B cell (primary cell): ENCODE measurements at regions of chr2 and their contacts with region 1.

Region 1: DNA sequence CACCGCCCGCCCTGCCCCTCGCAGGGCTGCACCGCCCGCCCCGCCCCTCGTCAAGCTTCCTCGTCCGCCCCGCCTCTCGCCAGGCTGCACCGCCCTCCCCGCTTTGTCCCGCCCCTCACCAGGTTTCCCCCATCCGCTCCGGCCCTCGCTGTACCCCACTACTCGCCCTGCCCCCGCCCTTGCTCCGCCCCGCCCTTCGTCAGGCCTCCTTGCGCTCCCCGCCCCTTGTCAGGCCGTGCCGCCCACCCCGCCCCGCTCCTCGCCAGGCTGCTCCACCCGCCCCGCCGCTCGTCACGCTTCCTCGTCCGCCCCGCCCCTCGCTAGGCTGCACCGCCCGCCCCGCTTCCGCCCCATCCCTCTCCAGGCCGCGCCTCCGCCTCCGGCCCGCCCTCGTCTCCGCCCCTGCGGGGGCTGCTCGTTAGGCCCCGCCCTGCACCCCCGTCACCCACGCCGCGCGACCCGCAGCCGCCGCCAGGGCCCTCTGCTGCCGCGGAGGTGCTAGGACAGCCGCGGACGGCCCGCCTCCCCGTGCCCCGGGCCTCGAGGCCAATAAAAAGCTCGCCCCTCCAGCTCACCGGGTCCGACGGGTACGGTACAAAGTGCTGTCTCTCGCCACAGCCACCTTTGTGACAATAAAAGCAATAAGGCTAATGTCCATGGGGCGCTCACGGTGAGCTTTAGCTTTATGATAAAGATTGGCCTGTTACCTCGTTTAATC is 574 bp upstream of the DNPEP start:
- DNase-seq: peak; percentile 99
- ATAC-seq: peak; percentile 77
- H3K4me3 ChIP-seq: peak overlapping the region in 4 of 5 experiments; percentile 23 to 50 (median 45)
- H3K4me3 Mint-ChIP-seq: peak overlapping the region; percentile 95
- H3K27ac ChIP-seq: peak overlapping the region; percentile 62 to 85
- H3K27ac Mint-ChIP-seq: peak overlapping the region; percentile 93
- H3K4me1 ChIP-seq: peaks cover 15 to 18% of the 10 kb centered on the region in 2 donors
- H3K4me1 Mint-ChIP-seq: peaks cover 13% of the 10 kb centered on the region
- H3K27me3 ChIP-seq: peaks cover 0 to 3% (median 0%) of the 10 kb centered on the region in 4 experiments
- H3K27me3 Mint-ChIP-seq: peaks cover 5% of the 10 kb centered on the region
- CTCF ChIP-seq: peak; percentile 70

Region 2: DNA sequence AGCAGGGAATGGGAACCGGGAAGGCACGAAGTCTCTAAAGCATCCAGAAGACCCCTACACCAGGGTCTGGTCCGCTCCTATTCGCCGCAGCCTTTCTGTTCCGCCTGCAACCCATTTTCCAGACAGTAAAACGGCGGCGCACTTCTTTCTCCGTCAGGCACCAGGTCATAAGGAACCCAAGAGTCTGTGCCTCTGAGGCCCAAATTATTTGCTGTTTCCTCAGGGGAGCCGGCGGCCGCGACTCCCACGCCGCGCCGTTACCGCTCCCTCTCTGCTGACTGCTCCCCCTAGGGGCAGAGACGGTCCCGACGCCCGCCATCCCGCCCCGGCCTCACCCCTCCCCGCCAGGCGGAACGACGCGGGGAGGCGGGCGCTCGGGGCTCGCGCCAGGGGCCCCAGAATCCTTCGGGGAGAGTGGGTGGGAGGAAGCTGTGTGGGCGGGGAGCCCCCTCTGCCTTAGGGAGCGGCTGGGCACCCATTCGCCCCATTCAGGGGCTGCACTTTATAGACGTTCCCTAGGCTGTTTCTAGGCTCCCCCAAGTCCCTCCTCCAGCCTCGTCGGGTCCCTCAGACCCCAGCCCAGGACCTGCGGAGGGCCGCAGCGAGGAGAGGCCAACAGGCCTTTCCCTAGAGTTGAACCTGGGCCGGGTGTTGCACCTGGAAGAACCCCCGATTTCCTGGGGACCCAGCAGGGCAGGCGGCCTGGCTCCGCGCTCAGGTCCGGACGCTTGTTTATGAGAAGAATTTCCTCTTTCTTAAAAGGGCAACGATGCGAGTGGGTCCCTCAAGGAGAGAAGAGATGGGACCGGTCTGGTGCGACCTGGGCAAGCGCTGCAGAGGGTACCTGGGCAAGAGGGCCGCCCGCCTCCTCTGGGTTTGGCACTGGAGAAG is 992.2 kb before region 1 on chr2:
- CTCF ChIA-PET with region 1: no interaction called
- POLR2A ChIA-PET with region 1: no interaction called
- intact Hi-C with region 1: loop called (anchors 5 kb)
- DNase-seq: peak; percentile 98
- ATAC-seq: peak; percentile 69
- H3K4me3 ChIP-seq: peak overlapping the region; percentile 75 to 94 (median 89)
- H3K4me3 Mint-ChIP-seq: peak overlapping the region; percentile 96
- H3K27ac ChIP-seq: peak overlapping the region; percentile 88 to 89
- H3K27ac Mint-ChIP-seq: peak overlapping the region; percentile 99
- H3K4me1 ChIP-seq: peaks cover 35 to 61% of the 10 kb centered on the region in 2 donors
- H3K4me1 Mint-ChIP-seq: peaks cover 53% of the 10 kb centered on the region
- H3K27me3 ChIP-seq: no peaks in the 10 kb centered on the region
- H3K27me3 Mint-ChIP-seq: no peaks in the 10 kb centered on the region
- CTCF ChIP-seq: peak; percentile 83

Region 3: GRCh38 chr2:218898109-218898878 is 490.0 kb before region 1 on chr2:
- CTCF ChIA-PET with region 1: no interaction called
- POLR2A ChIA-PET with region 1: no interaction called
- intact Hi-C with region 1: loop called (anchors 5 kb)
- DNase-seq: peak; percentile 87
- ATAC-seq: peak; percentile 18
- H3K4me3 ChIP-seq: peak overlapping the region in 4 of 5 experiments; percentile 66 to 68 (median 68)
- H3K4me3 Mint-ChIP-seq: peak overlapping the region; percentile 87
- H3K27ac ChIP-seq: no peak overlapping the region
- H3K27ac Mint-ChIP-seq: peak overlapping the region; percentile 91
- H3K4me1 ChIP-seq: peaks cover 47 to 54% of the 10 kb centered on the region in 2 donors
- H3K4me1 Mint-ChIP-seq: peaks cover 48% of the 10 kb centered on the region
- H3K27me3 ChIP-seq: peaks cover 0 to 28% (median 18%) of the 10 kb centered on the region in 4 experiments
- H3K27me3 Mint-ChIP-seq: peaks cover 31% of the 10 kb centered on the region
- CTCF ChIP-seq: peak; percentile 99

Region 4: GRCh38 chr2:219229305-219230058 is 158.8 kb before region 1 on chr2 and contains the starts of genes ANKZF1 and ATG9A:
- CTCF ChIA-PET with region 1: interaction called, 3 read pairs
- POLR2A ChIA-PET with region 1: no interaction called
- intact Hi-C with region 1: loop called (anchors 1 kb)
- DNase-seq: peak; percentile 98
- ATAC-seq: peak; percentile 97
- H3K4me3 ChIP-seq: peak within 1 kb of the TSS; percentile 86 to 98 (median 92)
- H3K4me3 Mint-ChIP-seq: peak within 1 kb of the TSS; percentile 99
- H3K27ac ChIP-seq: peak within 1 kb of the TSS; percentile 74 to 87
- H3K27ac Mint-ChIP-seq: peak within 1 kb of the TSS; percentile 98
- H3K4me1 ChIP-seq: peaks cover 17 to 23% of the 10 kb centered on the region in 2 donors
- H3K4me1 Mint-ChIP-seq: peaks cover 38% of the 10 kb centered on the region
- H3K27me3 ChIP-seq: no peaks in the 10 kb centered on the region
- H3K27me3 Mint-ChIP-seq: no peaks in the 10 kb centered on the region
- CTCF ChIP-seq: no peak
- total RNA-seq, gene ANKZF1: 181 and 199 TPM in 2 replicates
- total RNA-seq, gene ATG9A: 59.4 and 65.5 TPM in 2 replicates

Region 5: GRCh38 chr2:219294356-219295351 is 93.6 kb before region 1 on chr2:
- CTCF ChIA-PET with region 1: interaction called, 4 read pairs
- POLR2A ChIA-PET with region 1: interaction called, 4 read pairs
- intact Hi-C with region 1: loop called (anchors 5 kb)
- DNase-seq: peak; percentile 95
- ATAC-seq: peak; percentile 97
- H3K4me3 ChIP-seq: peak overlapping the region in 4 of 5 experiments; percentile 48 to 67 (median 60)
- H3K4me3 Mint-ChIP-seq: peak overlapping the region; percentile 80
- H3K27ac ChIP-seq: peak overlapping the region; percentile 62 to 74
- H3K27ac Mint-ChIP-seq: peak overlapping the region; percentile 74
- H3K4me1 ChIP-seq: peaks cover 14 to 19% of the 10 kb centered on the region in 2 donors
- H3K4me1 Mint-ChIP-seq: peaks cover 16% of the 10 kb centered on the region
- H3K27me3 ChIP-seq: peaks cover 0 to 7% (median 1%) of the 10 kb centered on the region in 4 experiments
- H3K27me3 Mint-ChIP-seq: no peaks in the 10 kb centered on the region
- CTCF ChIP-seq: peak; percentile 99

Region 6: GRCh38 chr2:219418570-219419189 is 30.4 kb after region 1 on chr2:
- CTCF ChIA-PET with region 1: no interaction called
- POLR2A ChIA-PET with region 1: no interaction called
- intact Hi-C with region 1: no loop called
- DNase-seq: no peak
- ATAC-seq: no peak
- H3K4me3 ChIP-seq: no peak overlapping the region
- H3K4me3 Mint-ChIP-seq: no peak overlapping the region
- H3K27ac ChIP-seq: no peak overlapping the region
- H3K27ac Mint-ChIP-seq: no peak overlapping the region
- H3K4me1 ChIP-seq: no peaks in the 10 kb centered on the region
- H3K4me1 Mint-ChIP-seq: peaks cover 1% of the 10 kb centered on the region
- H3K27me3 ChIP-seq: peaks cover 0 to 39% (median 3%) of the 10 kb centered on the region in 4 experiments
- H3K27me3 Mint-ChIP-seq: peaks cover 46% of the 10 kb centered on the region
- CTCF ChIP-seq: no peak

Region 7: DNA sequence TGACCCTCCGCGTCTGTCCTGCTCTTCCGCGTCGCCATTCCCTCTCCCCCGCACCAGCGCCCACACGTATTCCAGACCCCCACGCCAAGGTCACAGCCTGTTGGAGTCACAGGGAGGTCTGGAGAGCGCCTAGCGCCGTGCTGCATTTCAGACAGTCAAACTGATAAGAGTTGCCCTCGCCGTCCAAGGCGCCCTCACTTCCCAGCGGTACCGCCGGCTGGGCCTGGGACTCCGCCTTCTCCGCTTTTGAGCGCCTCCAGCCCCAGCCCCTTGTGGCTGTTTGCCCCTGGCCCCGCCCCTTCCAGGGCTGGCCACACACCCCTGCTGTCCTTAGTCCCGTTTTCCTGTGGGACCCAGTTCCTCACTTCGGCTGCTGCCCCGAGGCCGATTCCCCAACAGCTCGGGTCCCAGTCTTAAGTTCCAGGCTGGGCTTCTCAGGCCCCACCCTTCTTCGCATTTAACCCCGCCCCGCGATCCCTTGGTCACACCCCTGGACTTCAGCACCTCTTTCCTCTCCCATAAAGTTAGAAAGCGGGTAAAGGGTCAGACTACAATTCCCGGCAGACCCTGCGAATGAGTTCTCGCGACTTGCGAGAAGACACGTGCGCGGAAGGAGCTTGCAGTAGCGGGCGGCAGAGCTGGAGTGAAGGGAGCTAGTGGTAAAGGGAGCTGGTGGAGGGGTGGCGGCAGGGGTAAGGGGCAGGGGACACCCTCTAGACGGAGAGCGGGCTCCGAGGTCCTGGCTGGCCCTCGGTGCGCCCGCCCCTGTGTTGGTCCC is 110.2 kb after region 1 on chr2 and contains the start of gene GMPPA:
- CTCF ChIA-PET with region 1: interaction called, 5 read pairs
- POLR2A ChIA-PET with region 1: interaction called, 10 read pairs
- intact Hi-C with region 1: no loop called
- DNase-seq: peak; percentile 94
- ATAC-seq: peak; percentile 96
- H3K4me3 ChIP-seq: peak within 1 kb of the TSS; percentile 65 to 90 (median 79)
- H3K4me3 Mint-ChIP-seq: peak within 1 kb of the TSS; percentile 93
- H3K27ac ChIP-seq: peak within 1 kb of the TSS in 1 of 2 donors; percentile 84
- H3K27ac Mint-ChIP-seq: peak within 1 kb of the TSS; percentile 87
- H3K4me1 ChIP-seq: peaks cover 38% of the 10 kb centered on the region in 2 donors
- H3K4me1 Mint-ChIP-seq: peaks cover 32% of the 10 kb centered on the region
- H3K27me3 ChIP-seq: peaks cover 0 to 46% (median 23%) of the 10 kb centered on the region in 4 experiments
- H3K27me3 Mint-ChIP-seq: peaks cover 33% of the 10 kb centered on the region
- CTCF ChIP-seq: no peak
- total RNA-seq, gene GMPPA: 27.8 and 32.0 TPM in 2 replicates

Region 8: DNA sequence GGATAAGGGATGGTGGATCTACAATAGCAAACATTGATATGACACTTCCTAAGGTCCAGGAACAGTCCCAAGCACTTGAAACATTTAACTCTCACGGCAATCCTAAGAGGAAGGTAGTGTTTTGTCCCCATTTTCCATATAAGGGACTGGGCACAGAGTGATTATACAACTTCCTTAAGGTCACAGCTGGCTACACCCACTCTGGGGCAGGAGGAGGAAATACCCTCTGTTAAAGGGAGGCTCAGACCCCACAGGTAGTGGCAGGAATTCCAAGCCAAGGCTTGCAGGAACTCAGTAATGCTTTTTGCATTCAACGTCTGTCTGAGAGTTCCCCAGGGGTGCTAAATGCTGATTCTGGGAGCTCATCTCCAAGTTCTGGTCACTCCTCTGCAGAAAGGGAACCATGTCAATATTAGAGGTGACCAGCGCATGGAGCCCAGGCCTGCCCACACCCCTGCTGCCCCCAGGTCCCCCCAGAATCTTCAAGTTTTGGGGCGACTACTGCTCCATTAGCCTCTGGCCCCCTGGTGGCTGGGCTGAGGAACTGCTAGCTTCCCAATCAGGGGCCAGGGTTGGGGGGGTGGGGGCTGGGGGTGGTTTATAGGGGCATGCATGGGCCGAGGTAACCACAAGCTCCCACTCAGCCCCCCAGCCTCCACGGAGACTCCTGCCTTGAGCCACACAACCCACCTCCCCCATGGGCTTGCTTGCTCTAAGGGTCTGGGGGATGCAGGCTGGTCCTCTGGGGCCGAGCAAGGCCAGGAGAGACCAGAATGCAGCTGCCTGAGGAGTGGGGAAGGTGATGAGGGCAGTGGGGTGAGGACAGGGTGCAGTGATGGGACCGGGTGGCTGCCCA is 172.0 kb after region 1 on chr2:
- CTCF ChIA-PET with region 1: no interaction called
- POLR2A ChIA-PET with region 1: no interaction called
- intact Hi-C with region 1: no loop called
- DNase-seq: peak; percentile 42
- ATAC-seq: peak; percentile 43
- H3K4me3 ChIP-seq: no peak overlapping the region
- H3K4me3 Mint-ChIP-seq: no peak overlapping the region
- H3K27ac ChIP-seq: no peak overlapping the region
- H3K27ac Mint-ChIP-seq: no peak overlapping the region
- H3K4me1 ChIP-seq: no peaks in the 10 kb centered on the region
- H3K4me1 Mint-ChIP-seq: no peaks in the 10 kb centered on the region
- H3K27me3 ChIP-seq: peaks cover 0 to 15% (median 0%) of the 10 kb centered on the region in 4 experiments
- H3K27me3 Mint-ChIP-seq: peaks cover 29% of the 10 kb centered on the region
- CTCF ChIP-seq: peak; percentile 87

Region 9: GRCh38 chr2:219597552-219598307 is 209.4 kb after region 1 on chr2 and contains the start of gene STK11IP:
- CTCF ChIA-PET with region 1: interaction called, 4 read pairs
- POLR2A ChIA-PET with region 1: interaction called, 3 read pairs
- intact Hi-C with region 1: loop called (anchors 1 kb)
- DNase-seq: peak; percentile 96
- ATAC-seq: peak; percentile 88
- H3K4me3 ChIP-seq: peak within 1 kb of the TSS; percentile 69 to 88 (median 86)
- H3K4me3 Mint-ChIP-seq: peak within 1 kb of the TSS; percentile 98
- H3K27ac ChIP-seq: peak within 1 kb of the TSS; percentile 59 to 88
- H3K27ac Mint-ChIP-seq: peak within 1 kb of the TSS; percentile 98
- H3K4me1 ChIP-seq: peaks cover 10 to 12% of the 10 kb centered on the region in 2 donors
- H3K4me1 Mint-ChIP-seq: peaks cover 23% of the 10 kb centered on the region
- H3K27me3 ChIP-seq: peaks cover 0 to 11% (median 0%) of the 10 kb centered on the region in 4 experiments
- H3K27me3 Mint-ChIP-seq: peaks cover 10% of the 10 kb centered on the region
- CTCF ChIP-seq: no peak
- total RNA-seq, gene STK11IP: 55.6 and 60.8 TPM in 2 replicates